ENCODE measurements at regions of chr3 and their contacts with region 1.

Region 1: GRCh38 chr3:124014366-124014942 is 22.5 kb upstream of the ROPN1 start:
- DNase-seq: no peak
- H3K4me3 ChIP-seq: no peak overlapping the region
- H3K27ac ChIP-seq: no peak overlapping the region
- H3K4me1 ChIP-seq: peaks cover 5% of the 10 kb centered on the region
- H3K27me3 ChIP-seq: no peaks in the 10 kb centered on the region
- CTCF ChIP-seq: no peak
- POLR2A ChIP-seq: no peak

Region 2: DNA sequence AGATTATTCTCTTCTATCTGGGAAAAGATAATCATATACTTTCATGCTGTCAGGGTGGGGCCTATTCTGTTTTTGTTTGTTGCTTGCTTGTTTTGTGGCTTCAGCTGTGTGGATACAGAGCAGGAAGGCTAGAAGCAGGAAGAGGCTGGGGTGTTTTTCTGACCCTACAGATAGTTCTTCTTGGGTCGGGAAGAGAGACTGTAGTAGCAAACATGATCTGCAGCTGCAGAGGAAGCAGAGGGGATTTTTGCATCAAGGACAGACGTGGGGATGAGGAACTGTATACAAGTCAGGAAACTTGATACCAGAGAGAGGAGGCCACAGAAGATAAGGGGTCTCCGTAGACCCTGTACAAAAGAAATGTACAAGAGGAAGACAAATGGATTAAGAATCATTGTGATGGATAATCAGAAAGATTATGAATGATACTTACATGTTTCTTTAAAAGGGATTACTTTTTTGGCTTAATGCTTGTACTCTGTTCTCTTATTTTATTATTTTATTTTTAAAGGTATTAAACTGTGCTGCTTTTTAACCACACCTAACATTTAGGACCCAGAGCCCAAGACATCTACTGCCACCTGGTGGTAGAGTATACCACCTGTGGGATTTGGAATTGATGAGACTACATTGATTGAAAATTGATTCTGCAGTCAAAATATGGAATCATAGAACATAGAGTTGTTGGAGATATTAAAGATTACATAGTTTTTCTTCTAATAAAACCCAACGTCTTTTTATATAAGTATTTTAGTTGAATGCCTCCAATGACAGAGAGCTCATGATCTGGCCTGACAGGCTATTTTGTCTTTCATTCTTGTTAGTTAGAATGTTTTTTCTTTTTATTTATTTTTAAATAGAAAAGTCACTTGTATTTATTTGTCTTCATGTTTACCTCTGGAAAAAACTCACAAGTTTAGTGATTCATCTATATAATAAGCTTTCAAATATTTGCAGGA is 64.8 kb after region 1 on chr3:
- intact Hi-C with region 1: loop called (anchors 5 kb)
- DNase-seq: peak; percentile 39
- H3K4me3 ChIP-seq: no peak overlapping the region
- H3K27ac ChIP-seq: no peak overlapping the region
- H3K4me1 ChIP-seq: no peaks in the 10 kb centered on the region
- H3K27me3 ChIP-seq: no peaks in the 10 kb centered on the region
- CTCF ChIP-seq: peak; percentile 65 to 86 (median 74)
- POLR2A ChIP-seq: no peak

Region 3: DNA sequence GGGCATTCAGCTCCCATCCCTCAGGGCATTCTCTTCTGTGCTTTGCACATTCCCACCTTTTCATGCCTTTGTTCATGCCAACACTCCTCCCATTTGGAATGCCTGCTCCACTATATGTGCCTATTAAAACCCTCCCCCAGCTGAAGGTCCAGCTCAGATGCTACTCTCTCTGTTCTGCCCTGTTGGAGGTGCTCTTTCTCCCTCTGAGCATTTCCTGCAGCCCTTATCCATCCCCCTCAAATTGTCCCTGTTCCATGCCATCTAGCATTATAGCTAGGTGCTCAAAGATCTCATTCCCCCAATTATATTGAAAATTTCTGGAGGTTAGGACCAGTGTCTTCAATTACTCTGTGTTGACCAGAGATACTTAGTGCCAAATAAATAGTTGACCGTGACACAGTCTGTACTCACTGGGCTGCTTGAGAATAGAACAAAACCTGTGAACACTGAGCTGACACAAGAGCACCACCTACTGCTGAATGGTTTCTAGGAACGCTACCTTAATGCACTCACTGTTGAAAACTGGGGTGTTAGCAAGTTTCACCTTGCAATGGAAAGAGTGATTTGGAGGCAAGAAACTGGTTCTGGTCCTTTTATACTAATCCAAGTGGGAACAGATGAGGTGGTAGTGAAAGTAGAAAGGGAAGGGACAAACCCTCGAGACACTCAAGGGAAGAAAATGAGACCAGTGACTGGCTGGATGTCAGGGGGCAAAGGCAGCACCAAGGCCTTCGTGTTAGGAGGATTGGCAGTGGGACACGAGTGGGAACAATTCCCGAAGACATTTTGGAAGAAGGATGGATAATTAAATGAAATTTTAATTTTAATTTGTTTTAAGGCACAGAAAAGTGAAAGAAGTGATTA is 267.2 kb after region 1 on chr3:
- intact Hi-C with region 1: loop called (anchors 5 kb)
- DNase-seq: no peak
- H3K4me3 ChIP-seq: no peak overlapping the region
- H3K27ac ChIP-seq: no peak overlapping the region
- H3K4me1 ChIP-seq: no peaks in the 10 kb centered on the region
- H3K27me3 ChIP-seq: no peaks in the 10 kb centered on the region
- CTCF ChIP-seq: peak in 2 of 4 experiments; percentile 41 to 43
- POLR2A ChIP-seq: no peak

Region 4: DNA sequence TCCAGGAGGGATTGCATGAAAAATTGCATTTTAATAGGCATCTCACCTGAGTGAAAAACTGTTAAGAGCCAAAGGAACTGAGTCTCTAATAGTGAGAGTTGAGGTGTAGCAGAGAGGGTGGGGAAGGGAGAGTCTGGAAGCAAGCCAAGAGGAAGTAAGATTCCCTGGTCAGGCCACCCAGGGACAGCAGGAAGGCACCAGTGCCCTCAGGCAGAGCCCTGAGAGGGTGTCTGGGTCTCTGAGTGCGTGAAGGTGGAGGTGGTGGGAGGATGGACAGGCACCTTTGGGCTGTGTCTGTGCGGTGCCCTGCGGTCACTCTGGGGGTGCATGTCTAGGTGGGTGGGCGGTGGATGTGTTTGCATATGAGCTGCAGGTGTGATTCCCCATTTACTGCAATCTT is 277.9 kb after region 1 on chr3:
- intact Hi-C with region 1: no loop called
- DNase-seq: no peak
- H3K4me3 ChIP-seq: no peak overlapping the region
- H3K27ac ChIP-seq: no peak overlapping the region
- H3K4me1 ChIP-seq: no peaks in the 10 kb centered on the region
- H3K27me3 ChIP-seq: no peaks in the 10 kb centered on the region
- CTCF ChIP-seq: no peak
- POLR2A ChIP-seq: no peak

Region 5: GRCh38 chr3:124467980-124468902 is 453.8 kb after region 1 on chr3:
- intact Hi-C with region 1: loop called (anchors 5 kb)
- DNase-seq: peak; percentile 17
- H3K4me3 ChIP-seq: no peak overlapping the region
- H3K27ac ChIP-seq: no peak overlapping the region
- H3K4me1 ChIP-seq: no peaks in the 10 kb centered on the region
- H3K27me3 ChIP-seq: no peaks in the 10 kb centered on the region
- CTCF ChIP-seq: peak; percentile 86 to 90 (median 88)
- POLR2A ChIP-seq: no peak

Region 6: DNA sequence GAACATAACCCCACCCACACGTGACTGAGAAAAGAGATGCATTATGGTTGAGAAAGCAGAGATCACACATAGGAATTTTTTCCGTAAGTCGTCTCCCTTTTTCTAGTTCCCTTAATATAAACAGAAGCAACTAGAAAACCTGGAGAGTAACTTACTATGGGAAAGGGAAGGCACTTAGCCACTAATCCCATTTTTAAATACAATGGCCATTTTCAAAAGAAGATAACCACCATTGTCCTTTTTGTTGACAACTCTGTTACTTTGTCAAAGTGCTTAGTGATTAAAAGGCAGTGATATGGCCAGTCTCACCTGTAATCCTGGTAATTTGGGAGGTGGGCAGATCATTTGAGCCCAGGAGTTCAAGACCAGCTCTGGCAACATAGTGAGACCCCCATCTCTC is 531.4 kb after region 1 on chr3:
- intact Hi-C with region 1: loop called (anchors 5 kb)
- DNase-seq: no peak
- H3K4me3 ChIP-seq: no peak overlapping the region
- H3K27ac ChIP-seq: no peak overlapping the region
- H3K4me1 ChIP-seq: no peaks in the 10 kb centered on the region
- H3K27me3 ChIP-seq: no peaks in the 10 kb centered on the region
- CTCF ChIP-seq: no peak
- POLR2A ChIP-seq: no peak